ENCODE measurements at regions of chr2 and their contacts with region 1.

Region 1: DNA sequence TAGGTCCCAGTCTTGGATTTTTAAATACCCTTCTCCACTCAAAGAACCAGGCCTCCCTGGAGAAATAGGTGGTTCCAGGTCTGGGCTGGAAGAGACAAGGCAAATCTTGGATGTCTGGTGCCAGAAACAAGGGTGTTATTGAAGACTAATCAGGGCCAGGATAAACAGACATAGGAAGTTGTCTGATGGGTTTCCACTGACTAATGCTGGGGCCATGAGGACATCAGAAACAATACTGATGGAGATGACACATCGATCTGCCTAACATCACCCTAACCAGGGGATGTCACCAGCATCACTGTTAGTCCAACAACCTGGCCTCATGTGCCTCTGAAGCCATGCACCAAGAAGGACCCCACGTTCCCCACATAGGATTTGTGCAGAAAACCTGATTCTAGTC is 42.5 kb upstream of the GLI2 start:
- DNase-seq: no peak
- H3K4me3 Mint-ChIP-seq: no peak overlapping the region
- H3K27ac Mint-ChIP-seq: no peak overlapping the region
- H3K4me1 Mint-ChIP-seq: peaks cover 5% of the 10 kb centered on the region
- H3K27me3 Mint-ChIP-seq: peaks cover 53% of the 10 kb centered on the region

Region 2: DNA sequence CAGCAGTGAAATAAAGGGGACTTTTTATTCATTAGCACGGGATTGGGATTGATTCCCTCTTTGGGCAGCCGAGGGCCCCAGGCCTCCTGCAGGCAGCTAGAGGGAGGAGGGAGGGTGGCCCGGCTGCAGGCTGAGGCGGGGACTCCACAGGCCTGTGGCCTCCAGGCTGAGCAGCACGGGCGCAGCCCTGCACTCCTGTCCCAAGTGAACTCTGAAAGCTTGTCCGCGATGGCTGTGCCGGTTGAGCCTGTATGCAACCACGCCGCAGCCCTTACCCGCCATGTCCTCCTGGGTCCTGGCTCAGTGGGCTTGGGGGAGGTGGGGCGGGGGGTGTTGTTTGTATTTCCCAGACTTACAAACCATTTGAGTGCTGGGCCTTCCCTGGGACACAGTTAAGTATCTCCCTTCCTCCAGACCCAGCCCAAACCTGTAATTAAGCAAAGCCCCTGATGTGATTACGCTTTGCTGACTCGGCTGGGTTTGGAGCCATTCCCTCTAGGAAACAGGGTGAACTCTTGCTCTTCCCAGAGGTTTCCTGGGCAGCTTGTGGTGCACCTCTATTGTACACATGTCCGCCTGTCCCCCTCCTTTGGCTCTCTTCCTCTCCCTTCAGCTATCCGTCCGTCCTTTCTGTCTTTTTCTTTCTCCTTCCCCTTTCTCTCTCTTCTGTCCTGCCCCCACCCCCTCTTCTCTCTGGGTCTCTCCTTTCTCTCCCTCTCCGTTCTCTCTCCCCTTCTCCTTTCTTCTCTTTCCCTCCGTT is 47.8 kb after region 1 on chr2:
- CTCF ChIA-PET with region 1: no interaction called
- DNase-seq: no peak
- H3K4me3 Mint-ChIP-seq: no peak overlapping the region
- H3K27ac Mint-ChIP-seq: no peak overlapping the region
- H3K4me1 Mint-ChIP-seq: peaks cover 5% of the 10 kb centered on the region
- H3K27me3 Mint-ChIP-seq: peaks cover 94% of the 10 kb centered on the region

Region 3: DNA sequence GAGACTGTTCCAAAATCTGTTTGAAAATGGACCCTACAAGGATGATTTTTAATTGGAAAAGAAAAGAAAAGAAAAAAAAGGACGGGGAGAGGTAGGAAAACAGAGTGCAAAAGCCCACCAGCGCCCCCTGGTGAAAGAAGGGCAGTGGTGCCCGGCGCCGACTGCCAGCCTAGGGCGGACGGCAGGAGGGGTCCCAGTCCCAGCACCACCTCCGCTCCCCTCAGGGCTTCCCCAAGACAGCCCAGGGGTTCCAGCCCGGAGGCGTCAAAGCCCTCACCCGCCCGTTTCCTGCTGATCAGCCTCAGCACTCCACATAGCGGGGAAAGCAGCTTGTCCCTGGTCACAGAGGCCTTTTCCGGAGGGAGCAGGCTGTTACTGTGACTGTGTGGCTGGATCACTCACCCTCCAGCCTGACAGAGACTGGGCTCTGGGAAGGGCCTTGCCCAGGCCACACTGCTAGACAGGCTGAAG is 377.9 kb after region 1 on chr2:
- CTCF ChIA-PET with region 1: interaction called, 14 read pairs
- DNase-seq: peak; percentile 65
- H3K4me3 Mint-ChIP-seq: no peak overlapping the region
- H3K27ac Mint-ChIP-seq: no peak overlapping the region
- H3K4me1 Mint-ChIP-seq: no peaks in the 10 kb centered on the region
- H3K27me3 Mint-ChIP-seq: no peaks in the 10 kb centered on the region

Measured in activated naive CD4-positive, alpha-beta T cell treated with anti-CD3 and anti-CD28 coated beads, Interleukin-2, amount 10 ng/mL, durations not matched to agents 7 days and 5 days (primary cell).